ENCODE measurements at regions of chr6 and their contacts with region 1.

Region 1: GRCh38 chr6:3742426-3743344 is 8.8 kb downstream of the PXDC1 start:
- DNase-seq: peak; percentile 85
- CTCF ChIP-seq: peak; percentile 90

Region 2: DNA sequence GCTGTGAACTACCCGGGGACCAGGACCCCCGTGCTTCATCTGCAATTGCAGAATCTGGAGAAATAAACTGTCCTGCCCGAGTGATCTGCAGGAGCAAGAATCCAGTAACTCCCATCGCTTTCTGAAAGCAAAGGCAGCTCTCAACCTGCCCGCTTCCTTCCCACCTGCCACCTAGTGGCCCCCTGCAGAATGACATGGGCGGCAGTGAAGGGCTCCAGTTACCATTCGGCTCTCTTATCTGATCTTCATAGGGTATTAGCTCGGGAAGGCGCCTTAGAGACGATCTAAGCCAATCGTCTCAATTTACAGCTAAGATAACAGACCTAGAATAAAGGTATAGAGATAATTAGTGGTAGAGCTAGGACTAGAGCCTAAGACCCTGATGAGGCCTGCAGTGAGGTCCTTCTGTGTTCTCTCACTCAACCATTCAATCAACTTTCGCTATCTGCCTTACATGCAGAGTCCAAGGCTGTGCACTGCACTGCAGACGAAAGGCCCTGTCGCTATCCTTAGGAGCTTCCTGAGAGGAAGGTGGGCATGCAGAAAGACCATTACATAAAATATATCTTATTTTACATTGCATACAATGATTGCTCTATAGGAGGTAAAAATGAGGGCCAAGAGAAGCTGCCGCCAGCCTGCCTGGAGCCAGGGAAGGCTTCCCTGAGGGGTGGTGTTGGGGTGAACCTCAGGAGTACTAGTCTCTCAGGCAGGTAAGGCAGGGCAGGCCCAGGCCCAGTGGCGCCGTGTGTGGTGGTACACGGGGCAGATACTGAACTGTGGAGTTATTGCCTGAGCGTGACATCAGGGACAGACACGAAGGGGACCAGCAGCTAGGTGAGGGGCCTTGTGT is 491.0 kb before region 1 on chr6:
- CTCF ChIA-PET with region 1: no interaction called
- POLR2A ChIA-PET with region 1: no interaction called
- DNase-seq: peak; percentile 87
- CTCF ChIP-seq: peak; percentile 93

Region 3: GRCh38 chr6:3421791-3422434 is 320.8 kb before region 1 on chr6:
- CTCF ChIA-PET with region 1: no interaction called
- POLR2A ChIA-PET with region 1: no interaction called
- DNase-seq: no peak
- CTCF ChIP-seq: no peak

Region 4: DNA sequence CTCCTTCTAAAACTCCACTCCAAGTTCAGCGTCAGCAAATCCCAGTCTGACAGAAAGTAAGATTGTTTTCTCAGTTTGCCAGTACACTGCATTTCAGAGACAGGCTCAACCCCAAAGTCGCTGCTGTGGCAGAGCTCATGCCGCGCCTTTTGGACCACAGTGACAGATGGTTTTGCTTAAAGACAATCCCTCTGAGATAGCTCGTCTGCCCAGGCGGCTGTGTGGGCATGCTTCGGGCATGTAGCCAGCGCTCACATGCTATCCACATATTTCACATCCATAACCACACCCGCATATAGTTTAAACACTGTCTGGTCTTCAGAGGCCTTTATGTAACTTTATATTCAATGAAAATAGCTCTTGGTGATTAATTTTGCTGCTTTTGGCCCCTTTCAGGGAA is 23.5 kb after region 1 on chr6:
- CTCF ChIA-PET with region 1: no interaction called
- POLR2A ChIA-PET with region 1: no interaction called
- DNase-seq: no peak
- CTCF ChIP-seq: no peak

Region 5: DNA sequence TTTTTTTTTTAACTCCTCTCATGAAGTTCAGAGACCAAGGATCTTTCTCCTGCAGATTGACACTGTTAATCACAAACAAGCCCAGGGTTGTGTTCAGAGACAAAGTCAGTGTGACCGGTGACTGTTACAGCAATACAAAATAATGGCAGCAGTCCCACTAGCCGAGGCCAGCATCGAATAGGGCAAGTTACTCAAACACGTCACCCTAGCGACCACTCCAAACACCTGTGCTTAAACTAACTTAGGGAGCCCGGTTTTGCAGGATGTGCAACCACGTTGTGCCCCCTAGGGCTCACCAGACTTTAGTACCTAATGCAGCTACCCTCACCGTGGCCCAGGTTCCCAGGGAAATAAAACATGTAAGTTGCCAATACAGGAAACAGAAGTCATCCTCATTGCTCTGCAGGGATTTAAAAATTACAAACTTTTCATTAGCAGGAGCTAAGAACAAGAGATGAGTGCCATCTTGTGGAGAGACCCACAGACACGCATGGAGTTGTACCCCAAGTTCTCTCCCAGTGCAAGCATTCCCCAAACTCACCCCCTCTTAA is 144.5 kb after region 1 on chr6:
- CTCF ChIA-PET with region 1: interaction called, 15 read pairs
- POLR2A ChIA-PET with region 1: no interaction called
- DNase-seq: peak; percentile 27
- CTCF ChIP-seq: no peak